ENCODE measurements at regions of chr2 and their contacts with region 1.

Region 1: GRCh38 chr2:160252278-160252887 is 52.3 kb upstream of the ITGB6 start:
- DNase-seq: peak in 1 of 2 donors; percentile 55
- ATAC-seq: peak in 2 of 3 donors; percentile 47
- H3K4me3 ChIP-seq: no peak overlapping the region
- H3K4me3 Mint-ChIP-seq: no peak overlapping the region
- H3K27ac ChIP-seq: no peak overlapping the region
- H3K27ac Mint-ChIP-seq: no peak overlapping the region
- H3K4me1 ChIP-seq: no peaks in the 10 kb centered on the region
- H3K4me1 Mint-ChIP-seq: peaks cover 0 to 3% of the 10 kb centered on the region in 2 donors
- H3K27me3 ChIP-seq: no peaks in the 10 kb centered on the region
- H3K27me3 Mint-ChIP-seq: peaks cover 0 to 3% of the 10 kb centered on the region in 2 donors
- CTCF ChIP-seq: peak; percentile 94

Region 2: GRCh38 chr2:160994141-160995002 is 742.0 kb after region 1 on chr2:
- intact Hi-C with region 1: loop called (anchors 1 kb)
- DNase-seq: peak; percentile 36 to 89
- ATAC-seq: peak; percentile 85 to 95 (median 94)
- H3K4me3 ChIP-seq: no peak overlapping the region
- H3K4me3 Mint-ChIP-seq: no peak overlapping the region
- H3K27ac ChIP-seq: no peak overlapping the region
- H3K27ac Mint-ChIP-seq: peak overlapping the region in 1 of 2 donors; percentile 5
- H3K4me1 ChIP-seq: no peaks in the 10 kb centered on the region
- H3K4me1 Mint-ChIP-seq: peaks cover 9 to 10% of the 10 kb centered on the region in 2 donors
- H3K27me3 ChIP-seq: no peaks in the 10 kb centered on the region
- H3K27me3 Mint-ChIP-seq: no peaks in the 10 kb centered on the region
- CTCF ChIP-seq: peak; percentile 87

Region 3: GRCh38 chr2:161063157-161063954 is 811.0 kb after region 1 on chr2:
- intact Hi-C with region 1: loop called (anchors 5 kb)
- DNase-seq: peak; percentile 27 to 81
- ATAC-seq: peak; percentile 87 to 96 (median 92)
- H3K4me3 ChIP-seq: no peak overlapping the region
- H3K4me3 Mint-ChIP-seq: no peak overlapping the region
- H3K27ac ChIP-seq: no peak overlapping the region
- H3K27ac Mint-ChIP-seq: no peak overlapping the region
- H3K4me1 ChIP-seq: no peaks in the 10 kb centered on the region
- H3K4me1 Mint-ChIP-seq: peaks cover 6% of the 10 kb centered on the region in 2 donors
- H3K27me3 ChIP-seq: no peaks in the 10 kb centered on the region
- H3K27me3 Mint-ChIP-seq: peaks cover 2 to 39% of the 10 kb centered on the region in 2 donors
- CTCF ChIP-seq: peak; percentile 97

Measured in natural killer cell (primary cell).